H1 (cell line): ENCODE measurements at regions of chr3 and their contacts with region 1.

Region 1: GRCh38 chr3:149771652-149772271 is 19.5 kb upstream of the COMMD2 start:
- DNase-seq: peak in 1 of 2 experiments; percentile 79
- H3K4me3 ChIP-seq: no peak overlapping the region
- H3K27ac ChIP-seq: no peak overlapping the region
- H3K4me1 ChIP-seq: no peaks in the 10 kb centered on the region
- H3K27me3 ChIP-seq: no peaks in the 10 kb centered on the region; a peak in 1 of 7 replicates
- CTCF ChIP-seq: peak; percentile 77 to 87 (median 86)
- EP300 ChIP-seq: no peak
- POLR2A ChIP-seq: no peak
- RAD21 ChIP-seq: peak; percentile 73 to 76

Region 2: GRCh38 chr3:149188494-149188893 is 583.3 kb before region 1 on chr3:
- CTCF ChIA-PET with region 1: no interaction called
- POLR2A ChIA-PET with region 1: no interaction called
- DNase-seq: no peak
- H3K4me3 ChIP-seq: no peak overlapping the region
- H3K27ac ChIP-seq: no peak overlapping the region
- H3K4me1 ChIP-seq: peaks cover 0 to 12% (median 2%) of the 10 kb centered on the region in 4 experiments; a peak in 5 of 7 replicates
- H3K27me3 ChIP-seq: no peaks in the 10 kb centered on the region
- CTCF ChIP-seq: no peak
- EP300 ChIP-seq: no peak
- POLR2A ChIP-seq: no peak
- RAD21 ChIP-seq: no peak

Region 3: GRCh38 chr3:149494022-149494758 is 277.6 kb before region 1 on chr3:
- CTCF ChIA-PET with region 1: interaction called, 46 read pairs
- POLR2A ChIA-PET with region 1: interaction called, 3 read pairs
- DNase-seq: peak; percentile 51 to 88
- H3K4me3 ChIP-seq: no peak overlapping the region
- H3K27ac ChIP-seq: no peak overlapping the region
- H3K4me1 ChIP-seq: peaks cover 0 to 3% (median under 1%) of the 10 kb centered on the region in 4 experiments; a peak in 3 of 7 replicates
- H3K27me3 ChIP-seq: no peaks in the 10 kb centered on the region
- CTCF ChIP-seq: peak; percentile 77 to 89 (median 86)
- EP300 ChIP-seq: no peak
- POLR2A ChIP-seq: no peak
- RAD21 ChIP-seq: peak; percentile 96 to 98

Region 4: GRCh38 chr3:149566292-149566975 is 205.3 kb before region 1 on chr3:
- CTCF ChIA-PET with region 1: interaction called, 37 read pairs
- POLR2A ChIA-PET with region 1: no interaction called
- DNase-seq: no peak
- H3K4me3 ChIP-seq: no peak overlapping the region
- H3K27ac ChIP-seq: no peak overlapping the region
- H3K4me1 ChIP-seq: peaks cover 0 to 6% (median 3%) of the 10 kb centered on the region in 4 experiments; a peak in 4 of 7 replicates
- H3K27me3 ChIP-seq: no peaks in the 10 kb centered on the region
- CTCF ChIP-seq: no peak
- EP300 ChIP-seq: no peak
- POLR2A ChIP-seq: no peak
- RAD21 ChIP-seq: no peak

Region 5: DNA sequence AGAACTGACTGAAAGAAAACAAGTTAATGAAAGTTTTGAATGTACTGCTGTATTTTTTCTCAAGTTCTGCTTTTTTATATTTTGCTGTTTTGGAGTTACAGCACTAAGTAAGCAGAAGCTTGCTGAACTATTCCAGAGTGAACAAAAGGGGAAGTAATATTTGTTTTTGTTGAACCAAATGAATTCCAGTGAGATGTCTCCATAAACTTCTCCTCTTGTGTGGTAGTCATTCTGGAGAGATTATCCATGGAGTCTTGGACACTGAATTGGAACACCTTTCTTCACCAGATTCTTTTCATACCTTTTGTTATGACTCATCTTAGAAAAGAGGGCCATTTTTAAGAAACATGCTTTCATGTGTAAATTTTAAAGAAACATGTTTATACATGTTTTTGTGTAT is 11.8 kb after region 1 on chr3:
- CTCF ChIA-PET with region 1: interaction called, 47 read pairs
- POLR2A ChIA-PET with region 1: interaction called, 3 read pairs
- DNase-seq: no peak
- H3K4me3 ChIP-seq: no peak overlapping the region
- H3K27ac ChIP-seq: no peak overlapping the region
- H3K4me1 ChIP-seq: no peaks in the 10 kb centered on the region
- H3K27me3 ChIP-seq: no peaks in the 10 kb centered on the region
- CTCF ChIP-seq: no peak
- EP300 ChIP-seq: no peak
- POLR2A ChIP-seq: no peak
- RAD21 ChIP-seq: no peak

Region 6: DNA sequence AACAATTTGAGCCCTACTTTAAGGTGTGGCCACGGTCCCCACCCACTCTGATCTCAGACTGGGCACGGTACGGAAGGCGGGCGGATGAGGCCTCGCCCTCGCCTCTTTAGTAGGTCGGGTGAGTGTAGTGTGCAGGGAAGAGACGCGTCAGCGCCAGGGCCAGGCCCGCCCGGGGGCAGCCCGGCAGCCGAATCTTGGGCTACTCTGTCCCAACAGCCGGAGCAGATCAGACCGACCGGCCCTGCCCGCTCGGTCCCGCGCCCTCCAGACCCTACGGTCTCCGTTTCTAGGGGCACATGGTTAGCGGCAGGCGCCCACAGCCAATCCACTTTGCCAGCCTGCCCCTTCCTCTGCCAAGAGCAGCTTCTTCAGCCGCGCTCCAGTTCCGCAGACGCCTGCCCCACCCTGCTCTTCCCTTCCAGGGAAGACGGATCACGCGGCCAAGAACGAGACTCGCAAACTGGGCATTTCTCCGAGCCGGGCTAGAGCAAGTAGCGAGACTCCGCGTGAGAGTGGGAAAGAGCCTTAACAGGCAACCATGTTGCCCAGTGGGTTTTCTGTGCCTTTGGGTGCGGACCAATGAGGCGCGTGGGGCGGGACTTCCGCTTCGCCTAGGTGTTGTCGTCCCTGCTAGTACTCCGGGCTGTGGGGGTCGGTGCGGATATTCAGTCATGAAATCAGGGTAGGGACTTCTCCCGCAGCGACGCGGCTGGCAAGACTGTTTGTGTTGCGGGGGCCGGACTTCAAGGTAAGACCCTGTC is 41.0 kb after region 1 on chr3 and contains the start of gene RNF13:
- CTCF ChIA-PET with region 1: interaction called, 103 read pairs
- POLR2A ChIA-PET with region 1: interaction called, 3 read pairs
- DNase-seq: peak; percentile 36 to 94
- H3K4me3 ChIP-seq: peak within 1 kb of the TSS; percentile 88 to 95 (median 91)
- H3K27ac ChIP-seq: peak within 1 kb of the TSS; percentile 89
- H3K4me1 ChIP-seq: peaks cover 0 to 7% (median 3%) of the 10 kb centered on the region in 4 experiments; a peak in 4 of 7 replicates
- H3K27me3 ChIP-seq: no peaks in the 10 kb centered on the region
- CTCF ChIP-seq: no peak
- EP300 ChIP-seq: no peak
- POLR2A ChIP-seq: peak; percentile 13 to 67
- RAD21 ChIP-seq: no peak
- total RNA-seq, gene RNF13: 35.4 and 37.1 TPM in 2 replicates

Region 7: DNA sequence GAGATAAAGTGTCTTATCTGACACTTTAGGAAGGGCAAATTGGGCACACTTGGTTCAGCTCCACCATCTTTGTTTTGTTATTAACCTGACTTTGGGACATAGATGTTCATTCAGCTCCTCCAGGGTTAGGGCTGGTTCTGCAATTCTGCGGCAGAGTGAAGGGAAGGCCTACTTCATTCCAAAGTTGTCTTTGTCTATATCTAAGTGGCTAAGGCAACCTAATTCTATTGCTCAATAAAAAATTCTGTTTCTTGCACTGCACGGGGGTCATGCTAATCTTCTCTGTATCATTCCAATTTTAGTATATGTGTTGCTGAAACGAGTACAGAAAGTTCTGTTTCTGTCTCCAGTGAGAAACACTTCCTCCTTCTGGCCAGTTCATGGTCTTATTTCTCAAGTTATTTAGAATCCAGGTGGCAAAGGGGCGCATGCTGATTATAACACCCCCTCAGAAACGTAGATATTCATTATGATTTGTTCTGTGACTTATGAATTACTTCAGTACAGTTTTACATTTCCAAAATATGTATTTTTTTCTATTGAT is 145.4 kb after region 1 on chr3:
- CTCF ChIA-PET with region 1: no interaction called
- POLR2A ChIA-PET with region 1: no interaction called
- DNase-seq: no peak
- H3K4me3 ChIP-seq: no peak overlapping the region
- H3K27ac ChIP-seq: no peak overlapping the region
- H3K4me1 ChIP-seq: no peaks in the 10 kb centered on the region
- H3K27me3 ChIP-seq: no peaks in the 10 kb centered on the region
- CTCF ChIP-seq: no peak
- EP300 ChIP-seq: no peak
- POLR2A ChIP-seq: no peak
- RAD21 ChIP-seq: no peak